ENCODE measurements at regions of chrX and their contacts with region 1.

Region 1: DNA sequence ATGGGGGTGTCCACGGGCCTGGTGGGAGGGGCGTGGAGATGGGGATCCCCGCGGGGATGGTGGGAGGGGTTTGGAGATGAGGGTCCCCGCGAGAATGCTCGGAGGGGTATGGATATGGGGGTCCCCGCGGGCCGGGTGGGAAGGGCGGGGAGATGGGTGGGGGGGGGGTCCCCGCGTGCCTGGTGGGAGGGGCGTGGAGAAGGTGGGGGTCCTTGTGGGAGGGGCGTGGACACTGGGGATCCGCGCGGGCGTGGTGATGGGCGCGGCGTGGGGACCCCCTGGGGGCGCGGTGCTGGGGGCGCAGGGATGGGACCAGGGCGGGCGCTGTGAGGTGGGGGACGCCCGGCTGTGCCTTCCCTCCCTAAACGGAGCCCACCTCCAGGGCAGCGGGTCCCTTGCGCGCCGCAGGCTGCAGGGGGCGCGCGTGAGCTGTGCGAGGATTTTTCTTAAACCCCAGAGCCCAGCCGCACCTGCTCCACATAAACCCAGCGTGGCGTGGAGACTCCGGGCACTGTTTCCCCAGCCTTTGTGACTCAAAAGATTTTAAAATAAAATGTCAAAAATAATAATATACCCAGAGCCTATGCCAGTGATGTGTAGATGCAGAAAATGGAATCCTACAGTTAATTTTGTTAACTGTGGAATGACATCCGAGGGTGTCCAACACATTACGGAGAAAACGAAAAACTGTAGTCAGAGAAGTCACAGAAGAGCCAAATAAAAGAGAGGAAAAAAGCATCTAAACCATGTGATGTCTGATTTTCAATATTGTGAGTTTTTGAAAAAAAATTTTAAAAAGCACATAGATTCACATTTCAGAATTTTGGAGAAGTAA is 1.5 kb upstream of the ASMTL start:
- DNase-seq: peak; percentile 86 to 91
- ATAC-seq: peak; percentile 10 to 54 (median 30)
- H3K4me3 ChIP-seq: peak overlapping the region in 9 of 10 donors; percentile 32 to 87 (median 60)
- H3K27ac ChIP-seq: peak overlapping the region in 8 of 10 donors; percentile 39 to 70 (median 62)
- H3K4me1 ChIP-seq: peaks cover 5 to 24% (median 12%) of the 10 kb centered on the region in 9 donors
- H3K27me3 ChIP-seq: no peaks in the 10 kb centered on the region
- CTCF ChIP-seq: peak; percentile 97 to 99 (median 97)

Region 2: DNA sequence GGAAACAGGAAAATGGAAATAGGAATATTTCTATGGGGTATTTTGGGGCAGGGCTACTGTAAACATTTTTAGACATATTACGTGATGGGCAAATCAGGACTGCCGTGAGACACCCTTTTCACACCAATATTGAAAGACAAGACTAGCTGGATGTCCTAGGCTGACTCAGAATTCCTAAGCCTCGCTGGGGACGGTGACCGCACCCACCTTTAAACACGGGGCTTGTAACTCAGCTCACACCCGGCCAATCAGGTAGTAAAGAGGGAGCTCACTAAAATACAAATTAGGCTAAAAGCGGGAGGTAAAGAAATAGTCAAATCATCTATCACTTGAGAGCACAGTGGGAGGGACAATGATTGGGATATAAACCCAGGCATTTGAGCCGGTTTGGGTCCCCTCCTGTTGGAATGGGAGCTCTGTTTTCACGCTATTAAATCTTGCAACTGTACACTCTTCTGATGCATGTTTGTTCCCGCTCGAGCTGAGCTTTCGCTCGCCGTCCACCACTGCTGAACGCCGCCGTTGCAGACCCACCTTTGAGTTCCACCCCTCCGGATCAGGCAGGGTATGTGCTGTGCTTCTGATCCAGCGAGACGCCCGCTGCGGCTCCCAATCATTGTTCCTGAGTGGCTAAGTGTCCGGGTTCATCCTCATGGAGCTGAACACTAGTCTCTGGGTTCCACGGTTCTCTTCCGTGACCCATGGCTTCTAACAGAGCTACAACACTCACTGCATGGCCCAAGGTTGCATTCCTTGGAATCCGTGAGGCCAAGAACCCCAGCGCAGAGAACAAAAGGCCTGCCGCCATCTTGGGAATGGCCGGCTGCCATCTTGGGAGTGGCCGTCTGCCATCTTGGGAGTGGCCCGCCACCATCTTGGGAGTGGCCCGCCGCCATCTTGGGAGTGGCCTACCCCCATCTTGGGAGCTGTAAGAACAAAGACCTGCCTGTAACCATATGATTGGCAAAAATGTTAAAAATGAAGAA is 394.3 kb before region 1 on chrX:
- intact Hi-C with region 1: no loop called
- DNase-seq: no peak
- ATAC-seq: no peak
- H3K4me3 ChIP-seq: no peak overlapping the region
- H3K27ac ChIP-seq: no peak overlapping the region
- H3K4me1 ChIP-seq: no peaks in the 10 kb centered on the region
- H3K27me3 ChIP-seq: peaks cover 0 to 2% (median 0%) of the 10 kb centered on the region in 7 donors
- CTCF ChIP-seq: no peak

Region 3: GRCh38 chrX:1292575-1293290 is 161.4 kb before region 1 on chrX:
- intact Hi-C with region 1: no loop called
- DNase-seq: no peak
- ATAC-seq: no peak
- H3K4me3 ChIP-seq: peak overlapping the region in 1 of 10 donors; percentile 11
- H3K27ac ChIP-seq: no peak overlapping the region
- H3K4me1 ChIP-seq: peaks cover 0 to 6% (median 0%) of the 10 kb centered on the region in 9 donors
- H3K27me3 ChIP-seq: peaks cover 0 to 11% (median 4%) of the 10 kb centered on the region in 7 donors
- CTCF ChIP-seq: no peak

Region 4: GRCh38 chrX:1580735-1581531 is 126.8 kb after region 1 on chrX:
- intact Hi-C with region 1: loop called in 6 of 10 experiments (anchors 1 to 5 kb)
- DNase-seq: peak in 1 of 2 donors; percentile 49
- ATAC-seq: peak in 5 of 8 donors; percentile 47 to 71 (median 65)
- H3K4me3 ChIP-seq: no peak overlapping the region
- H3K27ac ChIP-seq: no peak overlapping the region
- H3K4me1 ChIP-seq: peaks cover 0 to 4% (median 0%) of the 10 kb centered on the region in 9 donors
- H3K27me3 ChIP-seq: peaks cover 0 to 3% (median 0%) of the 10 kb centered on the region in 7 donors
- CTCF ChIP-seq: peak; percentile 57 to 91 (median 72)

Region 5: GRCh38 chrX:2584251-2585157 is 1130.3 kb after region 1 on chrX:
- intact Hi-C with region 1: loop called in 1 of 10 experiments (anchors 5 kb)
- DNase-seq: no peak
- ATAC-seq: no peak
- H3K4me3 ChIP-seq: no peak overlapping the region
- H3K27ac ChIP-seq: no peak overlapping the region
- H3K4me1 ChIP-seq: peaks cover 0 to 24% (median 7%) of the 10 kb centered on the region in 9 donors
- H3K27me3 ChIP-seq: peaks cover 0 to 63% (median 44%) of the 10 kb centered on the region in 7 donors
- CTCF ChIP-seq: no peak

Region 6: DNA sequence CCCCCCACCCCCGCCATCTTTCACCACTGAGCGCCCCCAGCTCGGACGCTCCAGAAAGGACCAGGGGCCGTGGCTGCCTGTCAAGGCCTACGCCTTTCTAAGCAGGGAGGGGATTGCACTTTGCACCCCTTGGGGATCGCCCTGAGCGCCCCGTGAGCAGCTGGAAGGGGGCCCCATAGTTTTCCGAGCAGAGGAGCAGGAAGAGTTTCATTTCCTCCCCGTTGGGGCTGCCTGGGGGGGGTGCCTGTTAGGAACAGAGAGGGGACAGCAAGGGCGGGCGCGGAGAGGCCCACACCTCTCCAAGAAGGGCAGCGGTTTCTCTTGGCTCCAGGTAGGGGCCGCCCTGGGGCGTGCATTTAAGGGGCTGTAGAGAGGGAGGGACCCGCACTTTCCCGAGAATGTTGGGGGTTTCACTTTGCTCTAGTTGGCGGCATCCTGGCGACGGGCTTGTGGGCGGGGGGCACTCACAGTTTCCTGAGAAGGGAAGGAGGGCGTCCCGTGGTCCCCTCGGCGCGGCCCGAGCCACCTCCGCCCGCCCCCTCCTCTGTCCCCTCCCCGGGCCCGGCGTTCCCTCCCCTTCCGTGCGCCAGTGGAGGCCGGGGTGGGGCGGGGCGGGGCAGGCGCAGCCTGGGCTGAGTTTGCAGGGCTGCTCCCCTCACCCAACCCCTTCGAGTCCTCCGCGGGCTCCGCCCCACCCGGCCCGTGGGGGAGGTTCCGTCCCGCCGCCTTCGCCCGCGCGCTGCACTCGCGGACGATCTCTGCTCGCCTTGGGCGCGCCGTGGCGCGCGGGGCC is 1154.7 kb after region 1 on chrX:
- intact Hi-C with region 1: loop called in 1 of 10 experiments (anchors 10 kb)
- DNase-seq: peak; percentile 86 to 92
- ATAC-seq: peak; percentile 96 to 99 (median 98)
- H3K4me3 ChIP-seq: peak overlapping the region; percentile 62 to 94 (median 83)
- H3K27ac ChIP-seq: peak overlapping the region in 9 of 10 donors; percentile 54 to 93 (median 82)
- H3K4me1 ChIP-seq: peaks cover 0 to 26% (median 11%) of the 10 kb centered on the region in 9 donors
- H3K27me3 ChIP-seq: no peaks in the 10 kb centered on the region
- CTCF ChIP-seq: no peak

Measured in heart right ventricle (tissue), 16 donors.